Activated naive CD4-positive, alpha-beta T cell treated with anti-CD3 and anti-CD28 coated beads for 36 hours (primary cell): ENCODE measurements at regions of chr1 and their contacts with region 1.

Region 1: DNA sequence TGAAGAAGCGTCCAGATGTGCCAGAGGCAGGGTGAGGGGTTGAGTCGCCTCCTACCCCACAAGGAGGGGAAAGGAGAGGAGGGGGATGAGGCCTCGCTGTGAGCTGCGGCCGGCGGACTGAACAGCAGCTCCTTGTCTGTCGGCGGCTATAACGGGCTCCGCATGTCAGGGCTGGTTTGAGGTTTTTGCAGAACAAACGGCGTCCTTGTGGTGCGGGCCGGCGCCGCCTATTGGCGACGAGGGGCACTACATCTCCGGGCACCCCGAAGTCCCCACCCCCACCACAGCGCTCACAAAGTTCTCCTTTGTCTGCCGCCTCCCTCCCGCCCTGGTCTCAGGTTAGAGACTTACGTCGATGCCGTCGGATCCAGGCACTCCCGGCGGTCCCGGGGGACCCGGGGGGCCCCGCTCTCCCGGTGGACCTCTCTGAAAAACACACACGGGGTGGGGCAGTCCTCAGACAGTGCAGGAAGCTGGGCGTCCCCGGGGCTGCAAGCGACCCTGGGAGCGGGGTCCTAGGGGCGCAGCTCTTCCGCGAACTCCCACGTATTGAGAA is 1.8 kb downstream of the COL9A2 start:
- DNase-seq: peak; percentile 90
- H3K4me3 Mint-ChIP-seq: peak overlapping the region; percentile 76
- H3K27ac Mint-ChIP-seq: no peak overlapping the region
- H3K4me1 Mint-ChIP-seq: peaks cover 28% of the 10 kb centered on the region
- H3K27me3 Mint-ChIP-seq: peaks cover 7% of the 10 kb centered on the region

Region 2: GRCh38 chr1:40078512-40079333 is 236.6 kb before region 1 on chr1:
- CTCF ChIA-PET with region 1: interaction called, 11 read pairs
- intact Hi-C with region 1: loop called (anchors 2 kb)
- DNase-seq: peak; percentile 75
- H3K4me3 Mint-ChIP-seq: no peak overlapping the region
- H3K27ac Mint-ChIP-seq: no peak overlapping the region
- H3K4me1 Mint-ChIP-seq: peaks cover 7% of the 10 kb centered on the region
- H3K27me3 Mint-ChIP-seq: no peaks in the 10 kb centered on the region

Region 3: GRCh38 chr1:40143891-40144575 is 171.3 kb before region 1 on chr1:
- CTCF ChIA-PET with region 1: interaction called, 10 read pairs
- intact Hi-C with region 1: loop called (anchors 1 kb)
- DNase-seq: peak; percentile 76
- H3K4me3 Mint-ChIP-seq: no peak overlapping the region
- H3K27ac Mint-ChIP-seq: no peak overlapping the region
- H3K4me1 Mint-ChIP-seq: peaks cover 6% of the 10 kb centered on the region
- H3K27me3 Mint-ChIP-seq: peaks cover 14% of the 10 kb centered on the region

Region 4: DNA sequence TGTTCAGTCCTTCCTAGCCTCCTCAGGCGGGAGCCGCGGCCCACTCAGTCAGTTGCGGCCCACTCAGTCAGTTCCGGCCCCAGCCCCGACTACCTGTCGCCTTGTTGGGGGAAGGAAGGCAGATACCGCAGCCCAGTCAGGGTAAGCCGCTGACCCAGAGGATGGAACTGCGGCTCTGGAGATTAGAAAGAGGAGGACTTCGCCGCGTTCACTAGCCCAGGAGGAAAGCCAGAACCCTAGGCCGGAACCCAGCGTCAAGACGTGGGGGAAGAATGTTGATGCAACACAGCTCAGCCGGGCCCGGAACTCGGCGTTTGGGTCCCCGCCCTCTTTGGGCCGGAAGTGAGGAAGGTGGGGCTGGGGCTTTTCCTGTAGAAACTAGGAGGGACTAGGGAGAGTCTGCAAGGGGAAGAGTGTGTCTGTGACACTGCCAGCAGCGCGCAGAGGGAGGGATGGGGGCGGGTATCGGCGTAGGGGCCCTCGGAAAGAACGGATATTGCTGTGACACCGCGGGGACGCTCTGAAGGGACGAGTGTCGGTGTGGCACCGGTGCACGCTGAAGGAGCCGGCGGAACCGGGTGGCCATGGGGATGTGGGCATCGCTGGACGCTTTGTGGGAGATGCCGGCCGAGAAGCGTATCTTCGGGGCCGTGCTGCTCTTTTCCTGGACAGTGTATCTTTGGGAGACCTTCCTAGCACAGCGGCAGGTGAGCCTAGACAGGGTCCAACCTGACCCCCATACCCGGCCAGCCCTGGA is 57.5 kb before region 1 on chr1 and contains the start of gene ZMPSTE24:
- CTCF ChIA-PET with region 1: interaction called, 4 read pairs
- intact Hi-C with region 1: loop called (anchors 1 kb)
- DNase-seq: peak; percentile 98
- H3K4me3 Mint-ChIP-seq: peak within 1 kb of the TSS; percentile 99
- H3K27ac Mint-ChIP-seq: peak within 1 kb of the TSS; percentile 100
- H3K4me1 Mint-ChIP-seq: peaks cover 35% of the 10 kb centered on the region
- H3K27me3 Mint-ChIP-seq: no peaks in the 10 kb centered on the region
- total RNA-seq, gene ZMPSTE24: 13.2 to 14.7 TPM

Region 5: GRCh38 chr1:40385437-40386358 is 70.4 kb after region 1 on chr1:
- CTCF ChIA-PET with region 1: interaction called, 13 read pairs
- intact Hi-C with region 1: no loop called
- DNase-seq: peak; percentile 85
- H3K4me3 Mint-ChIP-seq: peak overlapping the region; percentile 80
- H3K27ac Mint-ChIP-seq: peak overlapping the region; percentile 99
- H3K4me1 Mint-ChIP-seq: peaks cover 88% of the 10 kb centered on the region
- H3K27me3 Mint-ChIP-seq: no peaks in the 10 kb centered on the region